Cardiac septum (tissue), 1 donor: ENCODE measurements at regions of chr16 and their contacts with region 1.

Region 1: GRCh38 chr16:69482410-69482991 is 58.1 kb downstream of the CYB5B start:
- DNase-seq: no peak

Region 2: DNA sequence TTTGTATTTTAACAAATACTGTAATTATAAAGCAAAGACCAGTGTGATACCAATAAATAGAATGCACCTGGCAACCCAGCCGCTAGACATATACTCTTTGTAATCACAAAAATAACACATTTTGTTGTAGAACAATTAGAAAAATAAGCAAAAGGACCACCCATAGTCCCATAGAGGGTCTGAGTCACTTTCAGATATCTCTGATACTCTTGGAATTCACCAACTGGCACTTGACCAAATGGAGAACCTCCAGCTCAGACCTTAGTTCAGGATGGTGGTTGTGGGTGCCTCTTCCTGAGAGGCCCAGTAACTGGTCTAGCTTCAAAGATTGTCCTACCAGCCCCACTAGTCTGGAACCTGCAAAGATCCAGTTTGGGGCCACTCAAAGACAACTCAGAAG is 95.9 kb before region 1 on chr16:
- intact Hi-C with region 1: no loop called
- DNase-seq: no peak

Region 3: DNA sequence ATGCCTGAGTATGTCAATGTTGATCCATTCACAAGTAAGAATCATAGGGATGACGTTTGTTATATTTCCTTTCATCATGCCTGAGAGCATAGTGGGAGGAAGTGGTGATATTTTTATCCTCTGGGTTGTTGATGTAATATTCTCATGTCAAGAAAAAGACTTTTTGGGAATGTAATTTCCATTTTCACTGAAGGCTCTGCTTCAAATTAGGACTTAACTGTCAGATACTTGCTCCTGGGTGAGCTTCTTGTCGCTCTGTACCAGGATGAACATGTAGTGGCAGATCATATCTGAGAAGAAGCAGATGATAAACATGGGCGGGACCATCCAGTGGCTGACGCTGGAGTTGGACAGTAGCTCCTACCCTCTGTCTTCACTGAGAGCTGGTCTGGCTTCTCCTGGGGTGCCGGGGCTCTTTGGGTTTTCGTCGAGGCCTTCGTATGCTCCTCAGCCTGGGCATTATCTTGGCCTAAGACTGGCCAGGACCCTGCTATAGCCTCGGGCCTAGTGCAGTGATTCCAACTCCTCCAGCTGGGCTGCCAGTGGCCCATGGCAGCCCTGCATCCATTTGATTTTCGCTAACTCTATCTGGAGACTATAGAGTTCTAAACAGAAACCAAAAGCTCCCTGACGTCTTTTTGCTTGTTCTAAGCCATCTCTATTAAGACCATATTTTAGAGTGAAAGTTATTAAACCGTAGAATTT is 38.4 kb before region 1 on chr16:
- intact Hi-C with region 1: loop called (anchors 5 kb)
- DNase-seq: peak; percentile 79

Region 4: GRCh38 chr16:69501956-69502745 is 19.6 kb after region 1 on chr16:
- intact Hi-C with region 1: no loop called
- DNase-seq: peak; percentile 26

Region 5: DNA sequence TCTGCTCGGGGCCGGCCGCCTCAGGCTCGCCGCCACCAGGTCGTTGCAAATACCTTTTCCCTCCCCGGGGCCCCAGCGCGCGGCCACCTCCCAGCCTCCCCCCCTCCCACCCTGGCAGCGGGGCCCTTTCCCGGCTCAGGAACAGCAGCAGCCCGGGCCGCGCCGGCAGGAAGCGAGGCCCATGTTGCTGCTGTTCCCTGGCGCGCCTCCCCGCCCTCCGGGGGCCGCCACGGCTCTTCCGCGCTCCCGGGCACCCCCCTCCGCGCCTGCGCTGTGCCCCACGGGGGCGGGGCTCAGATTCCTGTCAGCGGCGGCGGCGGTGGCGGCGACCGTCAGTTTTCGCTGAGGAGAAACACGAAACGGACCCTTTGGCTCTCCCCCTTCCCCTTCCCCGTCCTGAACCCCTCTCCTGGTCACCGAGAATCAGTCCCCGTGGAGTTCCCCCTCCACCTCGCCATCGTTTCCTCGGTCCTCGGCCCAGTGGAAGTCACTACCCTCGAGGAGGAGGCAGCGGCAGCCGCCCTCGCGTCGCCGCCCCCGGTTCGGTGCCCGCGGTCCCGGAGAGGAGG is 83.3 kb after region 1 on chr16 and contains the start of gene NFAT5:
- intact Hi-C with region 1: loop called (anchors 1 kb)
- DNase-seq: peak; percentile 95
- total RNA-seq, gene NFAT5: 28.5 TPM

Region 6: DNA sequence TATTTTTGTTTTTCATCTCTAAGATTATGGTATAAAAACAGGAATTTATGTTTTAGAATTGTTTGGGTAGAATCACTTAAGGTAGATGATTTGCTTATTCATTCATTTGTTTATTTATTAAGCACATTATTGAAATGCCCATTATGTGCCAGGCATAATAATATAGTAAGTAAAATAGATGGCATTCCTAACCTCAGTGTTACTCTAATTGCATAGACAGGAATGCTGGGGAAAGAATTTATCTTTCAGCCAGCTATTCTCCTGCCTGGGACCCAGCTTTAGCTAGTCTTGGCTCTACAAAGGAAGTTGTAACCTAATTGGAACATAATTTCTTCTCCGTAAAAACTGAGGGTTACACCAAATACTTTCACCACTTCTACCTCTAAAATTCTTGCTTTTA is 127.9 kb after region 1 on chr16:
- intact Hi-C with region 1: no loop called
- DNase-seq: no peak